GM12878 (cell line): ENCODE measurements at regions of chr5 and their contacts with region 1.

Region 1: DNA sequence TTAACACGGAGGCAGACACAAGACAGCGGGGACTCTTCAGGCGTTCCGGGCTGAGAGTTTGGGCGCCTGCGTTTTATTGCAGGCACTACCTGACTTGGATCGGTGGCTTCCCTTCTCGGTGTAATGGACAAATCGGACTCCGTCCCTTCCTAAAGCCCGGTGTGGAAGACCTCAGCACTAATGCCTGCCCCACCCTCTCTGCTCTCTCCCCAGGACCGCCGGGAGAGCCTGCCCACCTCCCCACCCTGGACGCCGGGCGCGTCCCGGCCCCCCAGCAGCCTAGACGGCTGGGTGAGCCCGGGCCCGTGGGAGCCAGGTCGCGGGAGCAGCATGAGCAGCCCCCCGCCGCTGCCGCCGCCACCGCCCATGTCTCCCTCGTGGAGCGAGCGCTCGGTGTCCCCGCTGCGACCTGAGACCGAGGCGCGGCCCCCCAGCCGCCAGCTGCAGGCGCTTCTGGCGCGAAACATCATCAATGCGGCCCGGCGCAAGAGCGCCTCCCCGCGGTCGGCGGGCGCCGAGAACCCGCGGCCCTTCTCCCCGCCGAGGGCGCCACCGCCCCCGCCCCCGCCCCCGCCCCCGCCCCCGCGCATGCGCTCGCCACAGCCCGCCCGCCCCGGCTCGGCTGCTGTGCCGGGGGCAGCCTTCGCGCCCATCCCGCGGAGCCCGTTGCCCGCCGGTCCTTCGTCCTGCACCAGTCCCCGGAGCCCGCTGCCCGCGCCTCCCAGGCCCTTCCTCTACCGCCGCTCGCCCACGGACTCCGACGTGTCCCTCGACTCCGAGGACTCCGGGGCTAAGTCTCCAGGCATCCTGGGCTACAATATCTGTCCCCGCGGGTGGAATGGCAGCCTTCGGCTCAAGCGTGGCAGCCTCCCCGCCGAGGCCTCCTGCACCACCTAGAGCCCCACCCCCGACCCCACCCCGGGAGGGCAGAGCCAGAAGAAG is 4.6 kb upstream of the MYOZ3 start:
- DNase-seq: peak; percentile 11
- ATAC-seq: peak; percentile 84
- H3K4me3 ChIP-seq: peak overlapping the region; percentile 70; the same call in 1 of the 2 replicates
- H3K27ac ChIP-seq: no peak overlapping the region
- H3K4me1 ChIP-seq: peaks cover 7% of the 10 kb centered on the region
- H3K27me3 ChIP-seq: no peaks in the 10 kb centered on the region; a peak in 2 of 4 replicates
- CTCF ChIP-seq: peak; percentile 43 to 78 (median 75); a peak in 5 of 6 replicates
- EP300 ChIP-seq: no peak
- POLR2A ChIP-seq: peak; percentile 60
- RAD21 ChIP-seq: peak; percentile 76

Region 2: GRCh38 chr5:150589871-150590601 is 66.4 kb before region 1 on chr5:
- CTCF ChIA-PET with region 1: interaction called, 13 read pairs
- POLR2A ChIA-PET with region 1: no interaction called
- RAD21 ChIA-PET with region 1: interaction called, 14 read pairs
- SMC1A ChIA-PET with region 1: interaction called, 8 read pairs
- in situ Hi-C with region 1: no loop called
- intact Hi-C with region 1: no loop called
- DNase-seq: peak; percentile 56
- ATAC-seq: peak; percentile 94
- H3K4me3 ChIP-seq: no peak overlapping the region
- H3K27ac ChIP-seq: no peak overlapping the region
- H3K4me1 ChIP-seq: peaks cover 13% of the 10 kb centered on the region
- H3K27me3 ChIP-seq: no peaks in the 10 kb centered on the region; a peak in 1 of 4 replicates
- CTCF ChIP-seq: peak; percentile 37 to 43 (median 40); a peak in 4 of 6 replicates
- EP300 ChIP-seq: no peak; a peak in 1 of 4 replicates
- POLR2A ChIP-seq: no peak
- RAD21 ChIP-seq: peak; percentile 57